ENCODE measurements at regions of chrX and their contacts with region 1.

Region 1: DNA sequence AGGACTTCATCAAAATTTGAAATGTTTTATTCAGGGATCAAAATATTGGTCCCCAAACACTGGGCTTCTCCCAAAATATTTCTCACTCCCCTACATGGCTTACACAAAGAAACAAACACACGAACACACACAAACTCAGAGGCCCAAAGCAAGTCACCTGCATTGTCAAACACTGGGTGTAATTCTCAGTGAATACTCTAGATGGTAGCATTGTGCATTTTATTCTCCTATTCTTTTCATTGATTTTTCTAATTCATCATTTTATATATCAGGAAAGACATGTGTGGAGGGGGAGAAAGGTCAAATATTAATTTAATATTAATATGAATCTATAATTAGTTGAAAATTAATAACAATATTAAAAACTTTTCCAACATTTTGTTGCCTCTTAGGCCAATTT is 72.3 kb upstream of the TNMD start:
- H3K4me3 ChIP-seq: no peak overlapping the region
- H3K27ac ChIP-seq: no peak overlapping the region
- H3K4me1 ChIP-seq: no peaks in the 10 kb centered on the region
- CTCF ChIP-seq: no peak

Region 2: DNA sequence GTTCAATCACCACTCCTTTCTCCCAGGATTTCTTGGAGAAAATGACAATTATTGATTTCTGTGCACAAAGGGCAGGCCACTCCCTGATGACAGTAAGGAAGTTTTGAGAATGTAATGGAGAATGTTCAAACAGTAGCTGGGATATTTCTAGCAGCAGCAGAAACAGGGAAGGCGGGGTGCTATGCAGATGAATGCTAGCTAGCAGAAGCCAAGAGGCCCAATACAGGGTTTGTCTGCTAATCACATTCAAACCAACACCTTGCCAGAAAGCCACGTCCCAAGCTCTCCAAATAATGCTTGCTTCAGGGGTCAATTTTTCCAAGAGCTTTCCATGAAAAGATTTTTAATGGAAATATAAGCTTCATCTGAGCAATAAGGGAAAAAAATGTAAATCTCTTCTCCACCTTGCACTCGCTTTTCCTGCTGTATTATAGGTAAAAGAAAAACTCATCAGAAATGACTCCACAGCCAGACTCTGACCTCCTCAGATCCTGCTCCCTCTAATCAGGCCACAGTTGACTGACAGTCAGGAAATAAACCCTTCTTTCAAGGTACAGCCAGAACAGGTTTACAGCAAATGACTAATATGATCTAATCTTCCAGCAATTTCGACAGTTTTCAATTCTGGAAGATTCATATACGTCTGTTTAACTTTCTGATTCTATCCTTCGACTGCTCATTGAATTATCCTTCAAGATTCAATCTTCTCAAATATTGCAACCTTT is 17.7 kb before region 1 on chrX:
- CTCF ChIA-PET with region 1: interaction called, 13 read pairs
- POLR2A ChIA-PET with region 1: no interaction called
- H3K4me3 ChIP-seq: no peak overlapping the region
- H3K27ac ChIP-seq: no peak overlapping the region
- H3K4me1 ChIP-seq: no peaks in the 10 kb centered on the region
- CTCF ChIP-seq: no peak

Region 3: GRCh38 chrX:100587885-100588284 is 75.4 kb after region 1 on chrX:
- CTCF ChIA-PET with region 1: no interaction called
- POLR2A ChIA-PET with region 1: no interaction called
- H3K4me3 ChIP-seq: no peak overlapping the region
- H3K27ac ChIP-seq: no peak overlapping the region
- H3K4me1 ChIP-seq: no peaks in the 10 kb centered on the region
- CTCF ChIP-seq: no peak

Measured in HEK293 (cell line).